ENCODE measurements at regions of chr16 and their contacts with region 1.

Region 1: DNA sequence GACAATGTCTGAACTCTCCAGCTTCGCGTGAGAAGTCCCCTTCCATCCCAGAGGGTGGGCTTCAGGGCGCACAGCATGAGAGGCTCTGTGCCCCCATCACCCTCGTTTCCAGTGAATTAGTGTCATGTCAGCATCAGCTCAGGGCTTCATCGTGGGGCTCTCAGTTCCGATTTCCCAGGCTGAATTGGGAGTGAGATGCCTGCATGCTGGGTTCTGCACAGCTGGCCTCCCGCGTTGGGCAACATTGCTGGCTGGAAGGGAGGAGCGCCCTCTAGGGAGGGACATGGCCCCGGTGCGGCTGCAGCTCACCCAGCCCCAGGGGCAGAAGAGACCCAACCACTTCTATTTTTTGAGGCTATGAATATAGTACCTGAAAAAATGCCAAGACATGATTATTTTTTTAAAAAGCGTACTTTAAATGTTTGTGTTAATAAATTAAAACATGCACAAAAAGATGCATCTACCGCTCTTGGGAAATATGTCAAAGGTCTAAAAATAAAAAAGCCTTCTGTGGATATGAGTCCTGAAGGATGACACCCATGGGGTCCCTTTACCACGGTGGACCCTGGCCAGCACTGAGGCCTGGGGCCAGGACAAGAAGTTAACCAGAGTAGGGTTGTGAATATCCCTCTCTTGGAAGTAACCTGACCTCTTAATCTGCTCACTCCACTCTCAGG is 10.5 kb upstream of the ITGAD start:
- DNase-seq: peak; percentile 33
- ATAC-seq: peak; percentile 80
- H3K4me3 ChIP-seq: no peak overlapping the region
- H3K27ac ChIP-seq: no peak overlapping the region
- H3K4me1 ChIP-seq: peaks cover 23 to 32% of the 10 kb centered on the region in 2 experiments
- H3K27me3 ChIP-seq: no peaks in the 10 kb centered on the region
- CTCF ChIP-seq: peak; percentile 64 to 95 (median 93); a peak in 5 of 6 replicates
- POLR2A ChIP-seq: no peak
- RAD21 ChIP-seq: peak; percentile 78

Region 2: GRCh38 chr16:31215287-31216162 is 167.1 kb before region 1 on chr16:
- CTCF ChIA-PET with region 1: interaction called, 3 read pairs
- POLR2A ChIA-PET with region 1: interaction called, 3 read pairs
- RAD21 ChIA-PET with region 1: no interaction called
- intact Hi-C with region 1: loop called (anchors 5 kb)
- DNase-seq: peak; percentile 63
- ATAC-seq: peak; percentile 90
- H3K4me3 ChIP-seq: peak overlapping the region; percentile 89 to 96
- H3K27ac ChIP-seq: peak overlapping the region; percentile 95
- H3K4me1 ChIP-seq: peaks cover 9 to 33% of the 10 kb centered on the region in 2 experiments
- H3K27me3 ChIP-seq: no peaks in the 10 kb centered on the region
- CTCF ChIP-seq: no peak
- POLR2A ChIP-seq: peak; percentile 63
- RAD21 ChIP-seq: no peak

Region 3: DNA sequence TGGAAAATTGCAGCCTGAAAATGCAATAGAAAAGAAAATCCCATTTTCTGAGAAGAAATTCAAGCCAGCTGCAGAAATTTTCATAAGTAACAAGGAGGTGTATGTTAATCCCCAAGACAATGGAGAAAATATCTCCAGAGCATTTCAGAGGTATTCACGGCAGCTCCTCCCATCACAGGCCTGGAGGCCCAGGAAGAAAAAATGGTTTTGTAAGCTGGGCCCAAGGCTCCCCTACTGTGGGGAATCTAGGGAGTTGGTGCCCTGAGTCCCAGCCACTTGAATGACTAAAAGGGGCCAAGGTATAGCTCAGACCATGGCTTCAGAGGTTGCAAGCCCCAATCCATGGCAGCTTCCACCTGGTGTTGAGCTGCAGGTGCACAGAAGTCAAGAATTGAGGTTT is 397.7 kb after region 1 on chr16:
- CTCF ChIA-PET with region 1: no interaction called
- POLR2A ChIA-PET with region 1: no interaction called
- RAD21 ChIA-PET with region 1: no interaction called
- intact Hi-C with region 1: no loop called
- DNase-seq: no peak
- ATAC-seq: no peak
- H3K4me3 ChIP-seq: no peak overlapping the region
- H3K27ac ChIP-seq: no peak overlapping the region
- H3K4me1 ChIP-seq: no peaks in the 10 kb centered on the region
- H3K27me3 ChIP-seq: no peaks in the 10 kb centered on the region
- CTCF ChIP-seq: no peak
- POLR2A ChIP-seq: no peak
- RAD21 ChIP-seq: no peak